Mammary epithelial cell (primary cell): ENCODE measurements at regions of chr5 and their contacts with region 1.

Region 1: GRCh38 chr5:14216902-14217301 is 73.8 kb downstream of the TRIO start:
- DNase-seq: no peak
- H3K4me3 ChIP-seq: no peak overlapping the region
- H3K27ac ChIP-seq: peak overlapping the region; percentile 2
- H3K4me1 ChIP-seq: peaks cover 34% of the 10 kb centered on the region
- H3K27me3 ChIP-seq: no peaks in the 10 kb centered on the region
- CTCF ChIP-seq: no peak

Region 2: DNA sequence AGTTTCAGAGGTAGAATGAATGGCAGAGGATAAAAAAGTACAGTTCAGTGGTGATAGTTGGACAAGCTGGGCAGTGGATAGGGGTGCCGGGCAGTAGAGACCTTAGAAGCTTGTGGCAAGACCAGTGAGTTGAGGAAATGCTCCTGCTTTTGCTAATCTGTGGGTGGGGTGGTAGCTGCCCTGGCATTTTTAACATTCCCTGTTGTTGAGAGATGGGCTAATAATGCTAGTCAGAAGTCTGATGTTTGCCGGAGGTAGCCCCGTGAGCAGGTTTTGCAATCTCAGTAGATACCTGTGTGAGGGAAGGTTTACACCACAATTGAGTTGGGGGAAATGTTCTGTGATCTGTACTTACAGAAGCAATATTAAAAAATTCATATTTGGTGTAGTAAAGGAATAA is 17.3 kb after region 1 on chr5:
- CTCF ChIA-PET with region 1: interaction called, 3 read pairs
- dilution Hi-C with region 1: no loop called
- in situ Hi-C with region 1: no loop called
- intact Hi-C with region 1: loop called (anchors 2 kb)
- DNase-seq: peak; percentile 71
- H3K4me3 ChIP-seq: peak overlapping the region in 1 of 3 experiments; percentile 11
- H3K27ac ChIP-seq: peak overlapping the region; percentile 77
- H3K4me1 ChIP-seq: peaks cover 28% of the 10 kb centered on the region
- H3K27me3 ChIP-seq: no peaks in the 10 kb centered on the region
- CTCF ChIP-seq: no peak

Region 3: GRCh38 chr5:14298126-14298847 is 81.4 kb after region 1 on chr5:
- CTCF ChIA-PET with region 1: no interaction called
- dilution Hi-C with region 1: no loop called
- in situ Hi-C with region 1: no loop called
- intact Hi-C with region 1: no loop called
- DNase-seq: peak; percentile 63
- H3K4me3 ChIP-seq: peak overlapping the region in 1 of 3 experiments; percentile 3
- H3K27ac ChIP-seq: peak overlapping the region; percentile 40
- H3K4me1 ChIP-seq: peaks cover 16% of the 10 kb centered on the region
- H3K27me3 ChIP-seq: no peaks in the 10 kb centered on the region
- CTCF ChIP-seq: no peak